CD4-positive, alpha-beta T cell (primary cell): ENCODE measurements at regions of chr2 and their contacts with region 1.

Region 1: DNA sequence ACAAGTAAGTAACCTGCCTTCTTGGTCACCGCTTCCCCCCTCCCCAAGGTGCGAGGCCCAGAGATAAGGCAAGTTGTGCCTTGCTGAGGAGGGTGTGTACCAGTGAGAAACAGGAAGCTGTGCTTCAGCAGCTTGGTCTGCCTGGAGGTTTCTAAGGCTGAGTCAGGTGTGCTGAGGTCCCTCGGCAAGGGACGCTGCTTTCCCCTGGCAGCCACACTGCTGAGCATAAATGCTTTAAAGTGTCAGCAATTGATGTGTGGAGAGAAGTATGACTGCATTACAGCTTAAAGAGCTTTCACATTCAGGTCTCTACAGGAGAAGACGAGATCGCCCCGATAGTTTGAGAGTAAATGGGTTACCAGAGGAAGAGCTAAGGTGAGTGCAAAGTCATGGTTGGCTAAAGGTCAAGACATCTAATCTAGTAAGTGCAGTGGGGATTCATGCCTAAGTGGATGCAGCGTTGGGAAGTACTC is 86.9 kb downstream of the LIMS1 start:
- DNase-seq: peak; percentile 64 to 92 (median 78)
- ATAC-seq: peak; percentile 91
- H3K4me3 ChIP-seq: peak overlapping the region; percentile 65
- H3K4me3 Mint-ChIP-seq: peak overlapping the region; percentile 89
- H3K27ac ChIP-seq: peak overlapping the region; percentile 73 to 81
- H3K27ac Mint-ChIP-seq: peak overlapping the region; percentile 90
- H3K4me1 ChIP-seq: peaks cover 61% of the 10 kb centered on the region
- H3K4me1 Mint-ChIP-seq: peaks cover 89% of the 10 kb centered on the region
- H3K27me3 ChIP-seq: no peaks in the 10 kb centered on the region
- H3K27me3 Mint-ChIP-seq: no peaks in the 10 kb centered on the region
- CTCF ChIP-seq: no peak

Region 2: DNA sequence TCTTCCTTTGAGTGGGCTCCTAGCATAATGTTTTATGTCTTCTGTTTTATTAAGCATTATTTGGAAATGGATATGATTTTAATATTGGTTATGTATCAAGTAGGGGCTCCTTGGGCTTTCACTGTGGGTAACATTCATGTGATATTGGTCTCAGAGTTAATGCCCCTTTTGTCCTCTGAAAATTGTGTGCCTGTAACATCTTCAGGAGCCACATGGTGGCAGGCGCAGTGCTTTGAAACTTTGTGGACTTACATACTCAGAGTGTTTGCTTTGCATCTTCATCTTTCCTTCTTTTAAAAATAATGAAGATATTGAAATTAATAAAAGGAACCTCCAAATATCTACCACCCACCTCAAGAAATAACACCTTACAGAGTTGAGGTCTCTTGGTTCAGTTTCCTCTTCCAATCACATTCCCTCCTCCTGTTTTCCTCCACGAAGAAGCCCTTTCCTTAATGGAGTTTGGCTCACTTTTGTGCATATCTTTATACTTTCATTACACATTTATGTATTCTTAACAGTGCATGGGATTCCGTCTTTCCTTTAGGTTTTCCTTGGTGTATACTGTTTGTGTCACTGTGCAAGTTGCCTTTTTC is 13.3 kb before region 1 on chr2:
- CTCF ChIA-PET with region 1: interaction called, 6 read pairs
- POLR2A ChIA-PET with region 1: interaction called, 15 read pairs
- intact Hi-C with region 1: no loop called
- DNase-seq: peak; percentile 30 to 80 (median 54)
- ATAC-seq: peak; percentile 54
- H3K4me3 ChIP-seq: no peak overlapping the region
- H3K4me3 Mint-ChIP-seq: no peak overlapping the region
- H3K27ac ChIP-seq: no peak overlapping the region
- H3K27ac Mint-ChIP-seq: no peak overlapping the region
- H3K4me1 ChIP-seq: peaks cover 32% of the 10 kb centered on the region
- H3K4me1 Mint-ChIP-seq: peaks cover 44% of the 10 kb centered on the region
- H3K27me3 ChIP-seq: no peaks in the 10 kb centered on the region
- H3K27me3 Mint-ChIP-seq: no peaks in the 10 kb centered on the region
- CTCF ChIP-seq: peak; percentile 81